Right ventricle myocardium inferior (tissue), 1 donor: ENCODE measurements at regions of chr4 and their contacts with region 1.

Region 1: GRCh38 chr4:93897559-93897958 is 69.0 kb downstream of the ATOH1 start:
- DNase-seq: no peak
- ATAC-seq: no peak

Region 2: DNA sequence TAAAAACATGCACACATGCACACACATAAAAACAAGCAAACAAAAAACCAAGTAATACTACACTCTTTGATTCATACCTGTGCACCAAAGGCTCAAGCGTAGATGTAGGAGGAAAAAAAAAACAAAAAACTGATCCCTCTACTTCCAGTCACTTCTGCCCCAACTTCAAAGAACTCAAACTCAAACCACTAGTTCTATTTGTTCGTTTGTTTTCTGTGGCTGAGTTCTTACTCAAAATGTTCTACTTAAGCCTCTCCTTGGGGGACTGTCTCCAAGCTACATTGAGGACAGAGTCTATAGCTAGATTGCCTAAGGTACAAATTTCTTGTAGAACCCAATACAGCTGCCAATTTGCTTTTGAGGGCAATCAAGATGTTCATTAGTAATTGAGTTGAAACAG is 240.0 kb before region 1 on chr4:
- intact Hi-C with region 1: no loop called
- DNase-seq: no peak
- ATAC-seq: no peak

Region 3: DNA sequence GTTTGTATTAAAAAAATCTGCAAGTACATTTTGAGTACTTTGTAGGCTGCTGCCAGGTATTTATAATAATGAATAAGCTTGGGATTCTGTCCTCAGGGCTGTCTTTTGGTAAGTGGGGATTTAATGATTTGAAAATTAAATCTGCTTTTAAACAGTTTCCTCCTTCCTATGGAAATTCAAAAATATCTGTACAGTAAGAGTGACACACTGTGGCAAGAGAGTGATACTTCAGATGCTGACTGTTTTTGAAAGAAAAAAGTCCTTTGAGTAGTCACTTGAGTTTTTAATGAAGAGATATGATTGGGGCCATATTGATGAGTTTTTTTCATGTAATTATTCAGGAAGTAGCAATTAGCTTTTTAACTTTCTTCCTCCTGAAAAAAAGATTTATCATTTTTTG is 359.3 kb after region 1 on chr4:
- intact Hi-C with region 1: loop called (anchors 5 kb)
- DNase-seq: no peak
- ATAC-seq: no peak